Activated CD8-positive, alpha-beta T cell treated with anti-CD3 and anti-CD28 coated beads, Interleukin-2, amount 10 ng/mL, durations not matched to agents 7 days and 5 days (primary cell): ENCODE measurements at regions of chr21 and their contacts with region 1.

Region 1: GRCh38 chr21:25421327-25422028 is 185.8 kb downstream of the MRPL39 start:
- DNase-seq: peak; percentile 79
- ATAC-seq: peak; percentile 98
- H3K4me3 Mint-ChIP-seq: peak overlapping the region; percentile 66
- H3K27ac Mint-ChIP-seq: peak overlapping the region; percentile 88
- H3K4me1 Mint-ChIP-seq: peaks cover 27% of the 10 kb centered on the region
- H3K27me3 Mint-ChIP-seq: no peaks in the 10 kb centered on the region

Region 2: DNA sequence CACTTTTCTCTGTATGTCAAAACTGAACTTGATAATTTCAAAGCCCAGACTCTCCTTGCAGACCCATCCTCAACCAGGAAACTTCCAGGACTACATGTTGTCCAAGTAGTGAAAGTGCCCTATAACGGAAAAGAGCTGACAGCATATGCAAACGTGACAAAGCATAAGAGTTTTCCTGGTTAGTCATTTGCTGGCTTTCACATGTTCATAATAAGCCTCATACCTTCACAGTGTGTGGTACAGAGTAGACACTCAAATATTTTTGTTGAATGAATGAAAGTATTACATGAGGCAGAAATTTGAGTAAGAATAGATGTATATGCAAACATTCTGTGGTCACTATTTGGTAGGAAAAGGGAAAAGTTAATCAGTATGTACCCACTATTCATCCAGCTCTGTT is 287.5 kb before region 1 on chr21:
- CTCF ChIA-PET with region 1: no interaction called
- POLR2A ChIA-PET with region 1: no interaction called
- DNase-seq: no peak
- ATAC-seq: no peak
- H3K4me3 Mint-ChIP-seq: no peak overlapping the region
- H3K27ac Mint-ChIP-seq: no peak overlapping the region
- H3K4me1 Mint-ChIP-seq: no peaks in the 10 kb centered on the region
- H3K27me3 Mint-ChIP-seq: no peaks in the 10 kb centered on the region

Region 3: GRCh38 chr21:25350056-25350455 is 71.4 kb before region 1 on chr21:
- CTCF ChIA-PET with region 1: no interaction called
- POLR2A ChIA-PET with region 1: no interaction called
- DNase-seq: peak; percentile 42
- ATAC-seq: peak; percentile 55
- H3K4me3 Mint-ChIP-seq: no peak overlapping the region
- H3K27ac Mint-ChIP-seq: no peak overlapping the region
- H3K4me1 Mint-ChIP-seq: no peaks in the 10 kb centered on the region
- H3K27me3 Mint-ChIP-seq: peaks cover 20% of the 10 kb centered on the region

Region 4: GRCh38 chr21:25370311-25370744 is 51.1 kb before region 1 on chr21:
- CTCF ChIA-PET with region 1: no interaction called
- POLR2A ChIA-PET with region 1: no interaction called
- DNase-seq: no peak
- ATAC-seq: no peak
- H3K4me3 Mint-ChIP-seq: no peak overlapping the region
- H3K27ac Mint-ChIP-seq: no peak overlapping the region
- H3K4me1 Mint-ChIP-seq: no peaks in the 10 kb centered on the region
- H3K27me3 Mint-ChIP-seq: peaks cover 7% of the 10 kb centered on the region

Region 5: GRCh38 chr21:25561668-25562641 is 140.5 kb after region 1 on chr21:
- CTCF ChIA-PET with region 1: interaction called, 40 read pairs
- POLR2A ChIA-PET with region 1: interaction called, 18 read pairs
- DNase-seq: peak; percentile 79
- ATAC-seq: peak; percentile 74
- H3K4me3 Mint-ChIP-seq: peak overlapping the region; percentile 88
- H3K27ac Mint-ChIP-seq: peak overlapping the region; percentile 92
- H3K4me1 Mint-ChIP-seq: peaks cover 59% of the 10 kb centered on the region
- H3K27me3 Mint-ChIP-seq: no peaks in the 10 kb centered on the region

Region 6: DNA sequence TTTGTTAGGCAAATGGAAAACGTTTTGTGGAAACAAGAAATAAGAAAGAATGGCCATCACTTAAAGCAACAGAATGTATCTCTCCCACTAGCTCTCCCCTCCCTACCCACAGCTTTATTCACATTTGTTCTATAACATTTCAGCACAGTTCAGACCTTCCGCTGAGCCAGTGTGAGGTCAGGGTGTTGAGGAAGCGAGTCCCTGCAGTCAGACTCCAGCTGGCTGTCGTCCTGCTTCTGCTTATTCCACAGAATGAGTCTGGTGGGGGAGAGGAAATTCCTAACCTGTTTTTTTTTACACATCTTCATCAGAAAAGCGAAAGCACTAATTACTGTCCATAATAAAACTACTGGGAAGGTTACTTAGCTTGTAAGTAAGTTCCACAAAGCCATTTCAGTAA is 146.8 kb after region 1 on chr21:
- CTCF ChIA-PET with region 1: interaction called, 40 read pairs
- POLR2A ChIA-PET with region 1: interaction called, 18 read pairs
- DNase-seq: no peak
- ATAC-seq: no peak
- H3K4me3 Mint-ChIP-seq: peak overlapping the region; percentile 49
- H3K27ac Mint-ChIP-seq: peak overlapping the region; percentile 86
- H3K4me1 Mint-ChIP-seq: peaks cover 81% of the 10 kb centered on the region
- H3K27me3 Mint-ChIP-seq: no peaks in the 10 kb centered on the region

Region 7: DNA sequence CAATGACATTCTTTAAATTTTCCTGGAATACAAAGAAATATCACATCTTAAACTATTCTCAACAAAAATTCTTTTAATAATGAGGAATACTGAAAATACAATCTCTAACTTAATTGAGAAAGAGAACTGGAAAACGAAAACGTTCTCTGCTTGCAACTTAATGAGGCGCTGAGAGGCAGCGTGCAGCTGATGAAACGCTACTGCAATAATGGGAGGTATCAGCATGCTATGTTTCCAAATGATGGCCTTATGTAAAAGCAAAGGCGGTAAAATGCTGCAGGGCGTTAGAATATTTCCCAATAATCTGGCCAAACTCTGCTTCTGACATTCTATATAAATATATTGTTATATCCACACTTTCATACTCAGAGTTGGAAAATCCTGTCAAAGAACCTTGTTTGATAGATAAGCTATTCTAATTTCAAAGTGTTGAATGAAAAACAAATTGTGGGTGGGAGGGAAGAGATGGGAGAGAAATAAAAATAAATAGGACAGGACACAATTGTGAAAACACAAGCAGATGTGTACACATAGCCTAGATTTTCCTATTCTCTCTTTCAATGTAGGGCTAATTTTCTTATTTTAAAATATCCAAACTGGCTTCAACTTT is 678.2 kb after region 1 on chr21:
- CTCF ChIA-PET with region 1: no interaction called
- POLR2A ChIA-PET with region 1: no interaction called
- DNase-seq: no peak
- ATAC-seq: no peak
- H3K4me3 Mint-ChIP-seq: no peak overlapping the region
- H3K27ac Mint-ChIP-seq: no peak overlapping the region
- H3K4me1 Mint-ChIP-seq: no peaks in the 10 kb centered on the region
- H3K27me3 Mint-ChIP-seq: no peaks in the 10 kb centered on the region